GM23248 (cell line): ENCODE measurements at regions of chr5 and their contacts with region 1.

Region 1: DNA sequence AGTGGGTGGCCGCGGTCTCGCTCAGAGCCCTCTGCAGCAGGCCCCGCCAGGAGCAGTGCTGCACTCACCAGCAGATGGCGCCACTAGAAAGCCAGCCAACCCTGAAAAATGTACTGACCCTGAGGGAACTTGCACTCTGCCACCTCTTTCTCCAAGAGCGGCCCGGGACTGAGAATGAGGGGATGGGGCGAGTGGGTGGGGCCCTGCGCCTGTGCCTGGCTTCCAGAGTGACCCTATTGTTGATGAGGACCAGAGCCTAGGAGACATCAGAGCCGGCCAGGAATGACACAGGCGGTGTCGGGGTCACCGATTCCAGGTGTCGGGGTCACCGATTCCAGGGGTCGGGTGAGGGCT is 2.9 kb upstream of the IL17B start:
- DNase-seq: peak; percentile 75
- H3K4me3 ChIP-seq: no peak overlapping the region
- H3K27ac ChIP-seq: no peak overlapping the region
- H3K4me1 ChIP-seq: no peaks in the 10 kb centered on the region
- H3K27me3 ChIP-seq: no peaks in the 10 kb centered on the region; the same call in 1 of the 2 replicates

Region 2: DNA sequence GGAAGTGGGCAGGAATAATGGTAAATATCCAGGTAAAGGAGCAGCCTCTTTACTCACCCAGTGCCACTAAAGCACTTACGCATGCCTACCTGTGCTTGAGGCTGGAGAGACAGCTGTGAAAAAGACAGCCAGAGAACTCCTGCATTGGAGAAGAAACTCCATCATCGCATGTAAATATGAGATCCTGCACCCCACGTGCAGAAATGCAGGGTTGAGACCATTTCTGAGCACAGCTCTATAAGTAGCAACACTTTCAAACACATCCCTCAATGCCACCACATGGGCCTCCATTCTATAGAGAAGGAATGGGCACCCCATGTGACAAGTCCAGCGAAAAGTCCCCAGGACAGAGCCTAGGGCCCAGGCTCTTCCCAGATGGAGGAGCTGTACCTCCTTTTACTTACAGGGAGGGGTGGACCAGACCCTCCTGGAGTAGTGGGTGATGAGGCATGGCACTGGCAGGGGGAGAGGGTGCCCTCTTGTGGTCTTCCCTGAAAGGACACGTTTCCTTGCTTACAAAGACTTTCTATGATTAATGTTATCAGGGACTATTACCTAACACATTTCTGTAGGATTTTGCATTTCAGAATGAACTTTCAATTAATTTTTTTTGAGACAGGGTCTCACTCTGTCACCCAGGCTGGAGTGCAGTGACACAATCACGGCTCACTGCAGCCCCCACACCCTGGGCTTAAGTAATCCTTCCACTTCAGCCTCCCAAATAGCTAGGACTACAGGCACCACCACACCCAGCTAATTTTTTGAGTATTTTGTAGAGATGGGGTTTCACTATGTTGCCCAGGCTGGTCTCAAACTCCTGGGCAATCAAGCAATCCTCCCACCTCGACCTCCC is 52.4 kb after region 1 on chr5:
- in situ Hi-C with region 1: loop called (anchors 5 kb)
- DNase-seq: peak; percentile 69
- H3K4me3 ChIP-seq: no peak overlapping the region
- H3K27ac ChIP-seq: peak overlapping the region; percentile 15; the same call in 1 of the 2 replicates
- H3K4me1 ChIP-seq: no peaks in the 10 kb centered on the region
- H3K27me3 ChIP-seq: no peaks in the 10 kb centered on the region